Activated naive CD4-positive, alpha-beta T cell treated with anti-CD3 and anti-CD28 coated beads for 36 hours (primary cell): ENCODE measurements at regions of chr12 and their contacts with region 1.

Region 1: GRCh38 chr12:66409195-66409871 is 107.0 kb downstream of the HELB start:
- DNase-seq: peak; percentile 59
- H3K4me3 Mint-ChIP-seq: no peak overlapping the region
- H3K27ac Mint-ChIP-seq: no peak overlapping the region
- H3K4me1 Mint-ChIP-seq: no peaks in the 10 kb centered on the region
- H3K27me3 Mint-ChIP-seq: peaks cover 4% of the 10 kb centered on the region

Region 2: GRCh38 chr12:65695113-65695865 is 714.0 kb before region 1 on chr12:
- CTCF ChIA-PET with region 1: no interaction called
- intact Hi-C with region 1: no loop called
- DNase-seq: no peak
- H3K4me3 Mint-ChIP-seq: no peak overlapping the region
- H3K27ac Mint-ChIP-seq: no peak overlapping the region
- H3K4me1 Mint-ChIP-seq: no peaks in the 10 kb centered on the region
- H3K27me3 Mint-ChIP-seq: peaks cover 14% of the 10 kb centered on the region

Region 3: GRCh38 chr12:66144791-66145754 is 264.3 kb before region 1 on chr12:
- CTCF ChIA-PET with region 1: interaction called, 11 read pairs
- intact Hi-C with region 1: loop called (anchors 1 kb)
- DNase-seq: peak; percentile 49
- H3K4me3 Mint-ChIP-seq: no peak overlapping the region
- H3K27ac Mint-ChIP-seq: peak overlapping the region; percentile 86
- H3K4me1 Mint-ChIP-seq: peaks cover 16% of the 10 kb centered on the region
- H3K27me3 Mint-ChIP-seq: no peaks in the 10 kb centered on the region

Region 4: GRCh38 chr12:66188584-66189485 is 220.5 kb before region 1 on chr12 and contains the start of gene IRAK3:
- CTCF ChIA-PET with region 1: no interaction called
- intact Hi-C with region 1: no loop called
- DNase-seq: peak; percentile 41
- H3K4me3 Mint-ChIP-seq: peak within 1 kb of the TSS; percentile 71
- H3K27ac Mint-ChIP-seq: no peak within 1 kb of the TSS
- H3K4me1 Mint-ChIP-seq: peaks cover 6% of the 10 kb centered on the region
- H3K27me3 Mint-ChIP-seq: peaks cover 48% of the 10 kb centered on the region
- total RNA-seq, gene IRAK3: 0.32 to 0.38 TPM

Region 5: GRCh38 chr12:66269757-66270383 is 139.5 kb before region 1 on chr12:
- CTCF ChIA-PET with region 1: interaction called, 47 read pairs
- intact Hi-C with region 1: loop called (anchors 1 kb)
- DNase-seq: peak; percentile 52
- H3K4me3 Mint-ChIP-seq: no peak overlapping the region
- H3K27ac Mint-ChIP-seq: no peak overlapping the region
- H3K4me1 Mint-ChIP-seq: peaks cover 5% of the 10 kb centered on the region
- H3K27me3 Mint-ChIP-seq: peaks cover 3% of the 10 kb centered on the region

Region 6: DNA sequence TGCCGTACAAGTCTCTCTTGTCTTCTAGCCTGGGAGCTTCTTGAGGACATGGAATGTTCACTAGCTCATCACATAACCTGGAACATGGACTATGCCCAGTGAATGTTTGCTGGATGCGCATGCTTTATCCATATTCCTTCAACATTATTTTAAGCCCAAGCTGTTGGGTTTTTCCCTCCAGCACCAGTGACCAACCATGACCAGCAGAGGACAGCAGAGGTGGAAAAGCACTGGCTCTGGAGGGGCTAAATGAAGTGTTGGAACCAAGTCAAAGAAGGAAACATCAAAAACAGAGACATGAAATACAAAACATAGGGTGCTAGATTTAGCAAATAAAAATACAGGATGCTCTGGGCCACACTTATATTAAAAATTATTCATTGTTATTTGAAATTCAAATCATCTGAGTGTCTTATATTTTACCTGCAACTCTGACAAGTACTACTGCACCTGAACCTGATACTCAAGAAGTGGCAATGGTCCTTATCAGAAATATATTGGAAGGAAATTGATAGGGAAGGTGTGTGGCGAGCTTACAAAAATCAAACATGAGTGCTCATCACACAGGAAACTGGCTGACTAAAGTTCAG is 130.1 kb before region 1 on chr12:
- CTCF ChIA-PET with region 1: interaction called, 4 read pairs
- intact Hi-C with region 1: loop called (anchors 1 kb)
- DNase-seq: peak; percentile 62
- H3K4me3 Mint-ChIP-seq: no peak overlapping the region
- H3K27ac Mint-ChIP-seq: no peak overlapping the region
- H3K4me1 Mint-ChIP-seq: peaks cover 40% of the 10 kb centered on the region
- H3K27me3 Mint-ChIP-seq: no peaks in the 10 kb centered on the region

Region 7: GRCh38 chr12:66352197-66352596 is 57.1 kb before region 1 on chr12:
- CTCF ChIA-PET with region 1: interaction called, 4 read pairs
- intact Hi-C with region 1: loop called (anchors 1 kb)
- DNase-seq: peak; percentile 35
- H3K4me3 Mint-ChIP-seq: no peak overlapping the region
- H3K27ac Mint-ChIP-seq: no peak overlapping the region
- H3K4me1 Mint-ChIP-seq: no peaks in the 10 kb centered on the region
- H3K27me3 Mint-ChIP-seq: no peaks in the 10 kb centered on the region

Region 8: DNA sequence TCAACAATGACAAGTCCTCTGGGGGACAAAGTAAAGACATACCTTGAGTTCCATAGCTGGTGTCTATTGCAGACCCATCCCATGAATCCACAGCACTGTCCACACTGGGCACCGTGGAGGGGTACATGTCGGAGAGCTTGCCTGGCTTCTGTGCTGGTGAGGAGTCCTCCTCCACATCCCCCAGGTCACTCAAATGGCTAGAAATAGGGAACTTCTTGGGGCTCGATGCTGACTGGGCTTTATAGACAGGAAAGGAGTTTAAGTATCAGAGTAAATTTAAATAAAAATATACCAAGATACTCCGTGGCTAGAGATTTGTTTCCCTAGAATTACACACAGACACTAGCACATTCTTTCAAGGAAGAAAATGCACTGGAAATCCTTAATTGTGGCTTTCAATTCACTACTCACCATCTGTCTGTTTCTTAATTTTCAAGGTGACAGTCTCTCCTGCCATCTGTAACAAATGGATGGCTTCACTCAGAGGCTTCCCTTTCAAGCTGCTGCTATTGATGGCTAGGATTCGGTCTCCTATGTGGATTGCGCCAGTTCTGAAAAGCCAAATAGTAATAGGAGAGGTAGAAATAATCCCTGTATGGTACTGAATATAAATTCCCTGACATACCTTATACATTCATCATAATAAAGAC is 16.9 kb before region 1 on chr12:
- CTCF ChIA-PET with region 1: interaction called, 10 read pairs
- intact Hi-C with region 1: no loop called
- DNase-seq: no peak
- H3K4me3 Mint-ChIP-seq: no peak overlapping the region
- H3K27ac Mint-ChIP-seq: no peak overlapping the region
- H3K4me1 Mint-ChIP-seq: peaks cover 14% of the 10 kb centered on the region
- H3K27me3 Mint-ChIP-seq: peaks cover 15% of the 10 kb centered on the region

Region 9: DNA sequence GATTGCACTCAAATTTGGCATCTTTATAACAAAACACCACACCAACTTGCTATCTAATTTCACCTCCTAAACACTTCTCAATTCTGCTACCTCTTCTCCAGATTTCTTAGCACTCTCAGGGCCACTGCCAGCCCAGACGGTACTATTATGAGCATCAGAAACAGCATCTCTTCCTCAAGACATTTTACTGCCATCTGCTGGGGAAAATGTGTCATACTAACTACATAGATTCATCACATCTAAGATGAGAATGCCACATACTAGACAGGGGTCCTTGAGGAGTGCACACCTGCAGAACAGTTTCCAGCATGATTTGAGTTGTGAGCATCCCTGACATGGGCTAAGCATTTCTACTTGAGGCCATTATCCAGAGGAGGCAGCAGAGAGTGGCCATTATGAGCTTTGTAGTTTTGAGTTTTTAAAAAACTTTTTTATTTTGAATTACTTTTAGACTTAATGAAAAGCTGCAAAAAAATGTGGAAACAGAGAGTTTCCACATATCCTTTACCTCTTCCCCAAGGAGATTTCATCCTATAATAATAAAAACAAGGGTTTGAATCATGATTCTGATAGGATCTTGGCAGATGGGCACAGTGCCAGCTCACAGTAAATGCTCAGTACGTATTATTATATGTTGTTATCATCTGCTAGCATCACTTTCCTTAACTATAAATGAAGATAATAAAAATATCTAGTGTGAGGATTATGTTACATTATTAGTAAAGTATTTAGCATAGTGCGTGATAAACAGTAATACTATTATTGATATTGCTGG is 284.8 kb after region 1 on chr12:
- CTCF ChIA-PET with region 1: no interaction called
- intact Hi-C with region 1: loop called (anchors 1 kb)
- DNase-seq: peak; percentile 41
- H3K4me3 Mint-ChIP-seq: no peak overlapping the region
- H3K27ac Mint-ChIP-seq: no peak overlapping the region
- H3K4me1 Mint-ChIP-seq: peaks cover 13% of the 10 kb centered on the region
- H3K27me3 Mint-ChIP-seq: no peaks in the 10 kb centered on the region